ENCODE measurements at regions of chr10 and their contacts with region 1.

Region 1: DNA sequence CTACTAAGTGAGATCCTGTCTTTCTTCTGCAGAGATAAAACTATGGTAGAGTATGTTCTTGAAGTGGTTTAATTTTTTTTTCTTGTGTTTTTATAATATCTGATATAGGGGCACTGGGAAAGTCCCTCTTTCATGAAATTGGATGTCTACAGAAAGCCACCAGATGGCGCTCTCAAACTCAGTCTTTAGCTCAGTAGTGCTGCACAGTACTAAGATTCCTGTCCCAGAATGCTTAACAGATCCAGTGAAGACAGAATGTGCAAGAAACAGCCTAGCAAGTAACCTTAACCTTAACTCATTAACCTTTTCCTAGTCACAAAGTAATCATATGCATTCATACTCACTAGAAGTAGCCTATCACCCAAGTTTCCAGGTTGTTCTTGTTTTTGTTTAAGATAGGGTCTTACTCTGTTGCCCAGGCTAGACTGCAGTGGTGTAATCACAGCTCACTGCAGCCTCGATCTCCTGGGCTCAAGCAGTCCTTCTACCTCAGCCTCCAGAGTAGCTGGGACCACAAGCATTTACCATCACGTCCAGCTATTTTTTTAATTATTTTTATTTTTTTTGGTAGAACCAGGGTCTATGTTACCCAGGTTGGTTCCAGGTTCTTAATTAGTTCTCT is 56.7 kb downstream of the IDE start:
- H3K4me3 Mint-ChIP-seq: no peak overlapping the region
- H3K27ac Mint-ChIP-seq: no peak overlapping the region
- H3K4me1 Mint-ChIP-seq: peaks cover 10% of the 10 kb centered on the region
- H3K27me3 Mint-ChIP-seq: no peaks in the 10 kb centered on the region

Region 2: GRCh38 chr10:92573798-92574547 is 56.8 kb after region 1 on chr10 and contains the start of gene IDE:
- intact Hi-C with region 1: loop called (anchors 1 kb)
- H3K4me3 Mint-ChIP-seq: peak within 1 kb of the TSS; percentile 88
- H3K27ac Mint-ChIP-seq: peak within 1 kb of the TSS; percentile 94
- H3K4me1 Mint-ChIP-seq: peaks cover 48% of the 10 kb centered on the region
- H3K27me3 Mint-ChIP-seq: no peaks in the 10 kb centered on the region

Region 3: DNA sequence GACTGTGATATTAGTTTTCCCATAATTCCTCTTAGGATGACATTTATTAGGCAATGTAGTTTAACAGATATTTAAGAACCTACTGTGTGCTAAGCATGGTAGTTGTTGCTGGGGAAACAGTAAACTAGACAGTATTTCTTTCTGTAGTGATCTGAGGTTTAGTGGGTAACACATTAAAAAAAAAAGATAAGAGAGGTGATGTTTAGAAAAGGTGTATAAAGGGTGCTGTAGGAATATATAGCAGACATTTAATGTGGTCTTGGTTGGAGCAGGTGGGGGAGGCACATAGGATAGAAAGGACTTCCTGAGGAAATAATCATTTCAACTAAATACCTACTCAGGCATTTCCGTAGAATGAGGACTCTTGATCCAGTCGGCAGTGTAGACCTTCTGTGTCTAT is 87.7 kb after region 1 on chr10:
- intact Hi-C with region 1: no loop called
- H3K4me3 Mint-ChIP-seq: no peak overlapping the region
- H3K27ac Mint-ChIP-seq: no peak overlapping the region
- H3K4me1 Mint-ChIP-seq: peaks cover 18% of the 10 kb centered on the region
- H3K27me3 Mint-ChIP-seq: no peaks in the 10 kb centered on the region

Region 4: GRCh38 chr10:92640110-92640509 is 123.0 kb after region 1 on chr10:
- intact Hi-C with region 1: loop called (anchors 5 kb)
- H3K4me3 Mint-ChIP-seq: no peak overlapping the region
- H3K27ac Mint-ChIP-seq: no peak overlapping the region
- H3K4me1 Mint-ChIP-seq: peaks cover 5% of the 10 kb centered on the region
- H3K27me3 Mint-ChIP-seq: no peaks in the 10 kb centered on the region

Measured in dendritic cell treated with granulocyte-macrophage colony-stimulating factor and Interleukin-4, amounts not matched to agents 40 ng/mL and 50 ng/mL, for 4 days (primary cell).